MCF 10A (cell line): ENCODE measurements at regions of chr18 and their contacts with region 1.

Region 1: GRCh38 chr18:51383116-51383515 is 185.6 kb upstream of the MEX3C start:
- DNase-seq: no peak
- H3K4me3 Mint-ChIP-seq: no peak overlapping the region
- H3K27ac Mint-ChIP-seq: no peak overlapping the region
- H3K4me1 Mint-ChIP-seq: peaks cover 4% of the 10 kb centered on the region
- H3K27me3 Mint-ChIP-seq: no peaks in the 10 kb centered on the region
- CTCF ChIP-seq: no peak

Region 2: DNA sequence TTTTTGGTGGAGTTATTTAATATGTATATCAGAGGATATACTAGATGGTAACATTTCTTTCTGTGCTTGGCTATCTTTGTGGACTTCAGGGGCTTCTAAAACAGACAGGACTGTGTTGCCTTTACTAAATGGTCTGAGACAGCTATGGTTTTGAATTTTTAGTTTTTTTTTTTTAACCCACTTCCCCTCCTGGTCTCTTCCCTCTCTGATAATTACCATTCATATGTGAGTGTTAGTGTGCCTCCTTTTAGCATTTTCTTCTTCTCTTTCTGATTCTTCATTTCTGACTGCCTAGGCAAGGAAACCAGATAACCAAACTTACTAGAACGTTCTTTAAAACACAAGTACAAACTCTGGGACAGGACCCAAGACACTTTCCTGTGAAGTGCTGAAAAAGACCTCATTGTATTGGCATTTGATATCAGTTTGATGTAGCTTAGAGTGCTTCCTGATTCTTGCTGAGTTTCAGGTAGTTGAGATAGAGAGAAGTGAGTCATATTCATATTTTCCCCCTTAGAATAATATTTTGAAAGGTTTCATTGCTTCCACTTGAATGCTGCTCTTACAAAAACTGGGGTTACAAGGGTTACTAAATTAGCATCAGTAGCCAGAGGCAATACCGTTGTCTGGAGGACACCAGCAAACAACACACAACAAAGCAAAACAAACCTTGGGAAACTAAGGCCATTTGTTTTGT is 300.4 kb before region 1 on chr18:
- CTCF ChIA-PET with region 1: no interaction called
- POLR2A ChIA-PET with region 1: no interaction called
- intact Hi-C with region 1: no loop called
- DNase-seq: peak; percentile 27
- H3K4me3 Mint-ChIP-seq: no peak overlapping the region
- H3K27ac Mint-ChIP-seq: peak overlapping the region; percentile 61
- H3K4me1 Mint-ChIP-seq: peaks cover 11% of the 10 kb centered on the region
- H3K27me3 Mint-ChIP-seq: no peaks in the 10 kb centered on the region
- CTCF ChIP-seq: no peak

Region 3: DNA sequence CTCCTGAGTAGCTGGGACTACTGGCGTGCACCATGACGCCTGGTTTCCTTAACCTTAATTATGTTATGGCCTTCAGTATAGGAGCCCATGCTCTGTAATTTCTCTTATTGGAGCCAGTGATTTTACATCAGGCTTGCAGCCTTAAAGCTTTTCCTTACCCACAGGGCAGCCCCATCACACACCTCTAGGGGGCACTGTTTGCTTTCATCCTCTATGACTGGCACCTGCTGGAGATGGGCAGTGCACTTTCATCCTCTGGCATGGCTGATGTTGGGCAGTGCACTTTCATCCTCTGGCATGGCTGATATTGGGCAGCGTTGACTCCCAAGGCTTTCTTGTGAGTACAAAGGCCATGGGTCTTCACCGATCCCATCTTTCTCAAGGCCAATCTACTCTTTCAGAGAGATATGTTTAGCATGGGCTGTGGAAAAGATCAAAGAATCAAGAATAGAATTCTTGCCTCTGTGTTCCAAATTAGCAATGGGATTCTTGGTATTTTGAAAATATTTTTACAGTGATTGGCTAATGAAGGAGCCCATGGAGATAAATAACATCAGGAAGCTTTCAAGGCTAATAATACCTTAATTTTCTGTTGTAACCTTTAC is 105.0 kb before region 1 on chr18:
- CTCF ChIA-PET with region 1: interaction called, 3 read pairs
- POLR2A ChIA-PET with region 1: interaction called, 3 read pairs
- intact Hi-C with region 1: loop called (anchors 1 kb)
- DNase-seq: peak; percentile 87
- H3K4me3 Mint-ChIP-seq: no peak overlapping the region
- H3K27ac Mint-ChIP-seq: no peak overlapping the region
- H3K4me1 Mint-ChIP-seq: no peaks in the 10 kb centered on the region
- H3K27me3 Mint-ChIP-seq: no peaks in the 10 kb centered on the region
- CTCF ChIP-seq: peak; percentile 87